Posterior vena cava (tissue), 2 donors: ENCODE measurements at regions of chr13 and their contacts with region 1.

Region 1: DNA sequence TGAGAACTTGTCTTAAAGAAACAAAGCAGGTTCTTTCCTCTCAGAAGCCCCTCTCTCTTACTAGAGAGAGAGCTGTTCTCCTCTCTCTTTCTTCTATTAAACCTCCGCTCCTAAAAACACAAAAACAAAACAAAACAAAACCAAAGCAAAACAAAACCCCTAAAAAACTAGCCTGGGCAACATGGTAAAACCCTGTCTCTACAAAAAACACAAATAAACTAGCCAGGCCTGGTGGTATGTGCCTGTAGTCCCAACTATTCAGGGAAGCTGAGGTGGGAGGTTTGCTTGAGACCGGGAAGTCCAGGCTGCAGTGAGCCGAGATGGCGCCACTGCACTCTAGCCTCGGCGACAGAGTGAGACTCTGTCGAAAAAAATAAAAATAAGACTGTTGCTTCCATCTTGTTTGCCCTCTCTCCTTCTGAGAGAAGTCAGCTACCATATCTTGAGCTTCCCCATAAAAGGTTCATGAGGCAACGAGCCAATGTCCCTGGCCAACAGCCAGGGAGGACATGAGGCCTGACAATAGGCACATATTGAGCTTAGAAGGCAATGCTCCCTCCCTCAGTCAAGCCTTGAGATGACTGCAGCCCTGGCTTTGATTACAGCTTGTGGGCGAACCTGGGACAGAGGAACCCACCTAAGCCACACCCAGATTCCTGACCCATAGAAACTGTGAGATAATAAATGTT is 17.5 kb upstream of the FLT3 start:
- DNase-seq: no peak

Region 2: DNA sequence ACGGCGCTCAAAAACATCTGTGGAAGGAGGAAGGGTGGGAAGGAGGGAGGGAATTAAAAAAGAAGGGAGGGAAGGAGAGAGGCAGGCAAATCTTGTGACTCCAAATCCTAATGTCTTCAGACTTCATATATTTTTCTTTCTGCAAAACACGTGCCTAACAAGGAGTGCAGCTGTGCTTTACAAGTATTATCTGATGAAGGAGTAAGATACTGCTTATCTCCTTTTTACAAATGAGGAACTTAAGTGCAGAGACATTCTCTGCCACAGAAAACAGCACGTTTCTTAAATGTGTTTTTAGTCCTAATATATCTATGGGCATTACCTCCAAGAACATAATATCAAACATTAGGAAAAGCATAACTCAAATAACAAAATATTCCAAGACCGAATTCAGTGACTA is 24.0 kb before region 1 on chr13:
- intact Hi-C with region 1: no loop called
- DNase-seq: no peak

Region 3: DNA sequence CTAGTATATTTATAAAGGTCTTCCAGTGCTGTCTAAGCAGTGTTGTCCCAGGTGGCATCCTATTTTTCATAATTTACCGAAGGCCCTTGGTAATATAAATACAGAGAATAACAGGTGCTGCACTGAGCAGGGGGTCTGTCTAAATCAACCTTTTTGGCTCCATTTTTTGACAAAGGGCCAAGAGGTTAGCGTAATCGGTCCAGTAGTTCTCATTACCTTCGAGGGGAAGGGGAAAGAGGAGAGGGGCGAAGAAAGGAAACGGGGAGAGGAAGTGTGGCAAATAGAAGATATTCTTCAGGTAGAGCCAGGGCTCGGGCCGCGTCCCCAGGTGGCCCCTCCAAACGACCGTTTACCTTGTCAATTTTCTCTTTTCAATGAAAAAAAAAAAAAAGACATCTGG is 19.8 kb after region 1 on chr13:
- intact Hi-C with region 1: loop called in 1 of 2 experiments (anchors 1 kb)
- DNase-seq: no peak